Breast epithelium (tissue), 4 donors: ENCODE measurements at regions of chr19 and their contacts with region 1.

Region 1: GRCh38 chr19:51219307-51219706 is 5.6 kb upstream of the CD33 start:
- DNase-seq: no peak
- H3K4me3 ChIP-seq: no peak overlapping the region
- H3K27ac ChIP-seq: no peak overlapping the region
- H3K4me1 ChIP-seq: no peaks in the 10 kb centered on the region
- H3K27me3 ChIP-seq: peaks cover 0 to 6% of the 10 kb centered on the region in 2 donors
- CTCF ChIP-seq: no peak
- POLR2A ChIP-seq: no peak

Region 2: GRCh38 chr19:51242881-51243630 is 23.7 kb after region 1 on chr19:
- intact Hi-C with region 1: loop called (anchors 2 kb)
- DNase-seq: no peak
- H3K4me3 ChIP-seq: no peak overlapping the region
- H3K27ac ChIP-seq: no peak overlapping the region
- H3K4me1 ChIP-seq: no peaks in the 10 kb centered on the region
- H3K27me3 ChIP-seq: peaks cover 0 to 23% of the 10 kb centered on the region in 2 donors
- CTCF ChIP-seq: no peak
- POLR2A ChIP-seq: no peak

Region 3: GRCh38 chr19:51272183-51272810 is 53.0 kb after region 1 on chr19:
- intact Hi-C with region 1: no loop called
- DNase-seq: no peak
- H3K4me3 ChIP-seq: no peak overlapping the region
- H3K27ac ChIP-seq: no peak overlapping the region
- H3K4me1 ChIP-seq: no peaks in the 10 kb centered on the region
- H3K27me3 ChIP-seq: no peaks in the 10 kb centered on the region
- CTCF ChIP-seq: no peak
- POLR2A ChIP-seq: no peak